Activated B cell treated with CpG ODN at 0.5 μM for 24 hours (primary cell): ENCODE measurements at regions of chr9 and their contacts with region 1.

Region 1: DNA sequence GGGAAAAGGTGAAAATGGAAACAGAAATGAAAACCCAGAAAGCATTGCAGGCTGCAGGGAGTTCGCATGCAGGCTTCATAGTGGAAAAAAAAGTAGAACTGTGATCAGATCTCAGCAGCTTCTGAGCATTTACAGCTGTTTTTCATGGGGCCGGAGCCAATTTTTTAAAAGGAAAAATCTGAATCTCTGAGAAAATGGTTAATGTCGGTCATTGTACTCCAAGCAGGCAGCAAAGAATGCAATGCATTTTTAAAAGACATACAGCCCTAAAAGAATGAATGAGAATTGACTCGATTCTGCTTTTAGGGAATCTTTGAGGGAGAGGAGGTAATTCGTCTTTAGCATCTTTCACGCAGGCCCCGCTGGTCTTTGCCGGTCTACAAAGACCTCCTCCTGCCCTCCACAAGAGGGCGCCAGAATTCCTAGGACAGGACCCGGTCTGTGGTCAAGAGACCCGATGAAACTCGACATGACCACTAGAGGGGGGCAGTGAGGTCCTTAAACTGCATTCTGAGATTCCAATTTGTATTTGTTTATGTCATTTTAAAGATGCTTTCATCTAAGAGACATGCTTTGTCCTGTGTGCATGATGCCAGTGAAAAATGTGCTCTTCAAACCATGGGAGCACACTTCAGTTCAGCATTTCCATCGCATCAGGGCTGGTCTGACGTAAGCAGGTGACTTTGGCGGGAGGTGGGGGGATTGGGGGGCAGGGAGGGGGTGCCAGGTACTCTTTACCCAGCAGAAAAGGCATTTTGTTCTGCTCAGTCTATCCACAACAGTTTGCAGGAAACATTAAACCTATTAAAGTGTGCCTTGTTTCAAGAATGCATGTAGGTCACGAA is 43.7 kb upstream of the TMEM252 start:
- DNase-seq: peak; percentile 57
- ATAC-seq: peak; percentile 100
- H3K4me3 Mint-ChIP-seq: peak overlapping the region; percentile 42
- H3K27ac Mint-ChIP-seq: no peak overlapping the region
- H3K4me1 Mint-ChIP-seq: peaks cover 27% of the 10 kb centered on the region
- H3K27me3 Mint-ChIP-seq: no peaks in the 10 kb centered on the region
- CTCF ChIP-seq: peak; percentile 99

Region 2: GRCh38 chr9:68437785-68438184 is 146.6 kb before region 1 on chr9:
- CTCF ChIA-PET with region 1: no interaction called
- POLR2A ChIA-PET with region 1: no interaction called
- intact Hi-C with region 1: no loop called
- DNase-seq: no peak
- ATAC-seq: no peak
- H3K4me3 Mint-ChIP-seq: no peak overlapping the region
- H3K27ac Mint-ChIP-seq: no peak overlapping the region
- H3K4me1 Mint-ChIP-seq: peaks cover 7% of the 10 kb centered on the region
- H3K27me3 Mint-ChIP-seq: peaks cover 11% of the 10 kb centered on the region
- CTCF ChIP-seq: no peak

Region 3: DNA sequence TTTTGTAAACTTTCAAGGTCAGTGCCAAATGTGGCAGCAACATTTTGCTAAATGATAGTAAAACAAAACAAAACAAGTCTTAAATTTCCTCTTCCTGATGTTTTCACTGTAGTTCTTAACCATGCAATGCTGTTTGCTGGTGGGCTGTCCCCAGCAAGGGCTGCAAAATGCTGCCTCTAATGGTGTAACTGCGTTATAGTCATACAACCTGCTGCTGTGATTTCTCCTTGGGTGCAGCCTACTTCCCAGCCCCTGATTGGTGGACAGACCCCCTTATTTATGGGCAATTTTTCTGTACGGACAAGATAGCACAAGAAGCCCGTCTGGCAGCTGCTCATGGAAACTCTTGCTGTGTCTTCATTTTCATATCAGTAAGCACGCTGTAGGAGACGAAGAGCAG is 94.0 kb after region 1 on chr9:
- CTCF ChIA-PET with region 1: interaction called, 4 read pairs
- POLR2A ChIA-PET with region 1: no interaction called
- intact Hi-C with region 1: loop called (anchors 1 kb)
- DNase-seq: no peak
- ATAC-seq: peak; percentile 65
- H3K4me3 Mint-ChIP-seq: no peak overlapping the region
- H3K27ac Mint-ChIP-seq: no peak overlapping the region
- H3K4me1 Mint-ChIP-seq: peaks cover 14% of the 10 kb centered on the region
- H3K27me3 Mint-ChIP-seq: no peaks in the 10 kb centered on the region
- CTCF ChIP-seq: no peak

Region 4: DNA sequence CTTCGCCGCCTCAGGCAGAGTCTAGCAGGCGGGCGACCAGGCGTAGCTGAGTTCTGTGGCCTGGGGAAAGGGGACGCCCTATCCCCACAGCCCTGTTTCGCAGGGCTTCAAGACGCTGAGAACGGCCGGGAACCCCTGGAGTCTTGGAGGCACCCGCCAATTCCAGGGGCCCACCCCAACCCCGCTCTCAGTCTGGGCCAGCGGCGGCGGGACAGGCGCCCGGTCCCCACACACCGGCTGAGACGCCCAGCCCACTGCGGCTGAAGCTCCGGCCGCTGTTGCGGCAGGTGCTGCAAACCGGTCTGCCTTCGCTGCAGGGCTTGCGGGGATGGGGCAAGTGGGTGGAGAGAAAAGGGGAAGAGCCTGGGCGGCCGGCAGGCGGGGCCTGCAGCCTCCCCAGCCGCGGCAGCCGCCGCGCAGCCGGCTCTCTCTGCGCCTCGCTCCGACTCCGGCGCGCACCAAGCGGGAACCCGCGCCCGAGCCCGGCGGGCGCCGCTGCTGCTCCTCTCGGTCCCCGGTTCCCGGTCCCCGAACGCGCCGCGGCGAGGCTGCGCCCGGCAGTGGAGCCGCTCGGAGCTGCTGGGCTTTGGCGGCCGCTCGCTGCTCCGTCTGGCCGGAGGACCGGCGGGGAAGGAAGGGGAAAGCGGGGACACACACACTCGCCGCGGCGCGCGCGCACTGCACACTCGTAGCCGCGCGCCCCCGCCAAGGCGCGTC is 120.6 kb after region 1 on chr9 and contains the start of gene PIP5K1B:
- CTCF ChIA-PET with region 1: interaction called, 4 read pairs
- POLR2A ChIA-PET with region 1: interaction called, 5 read pairs
- intact Hi-C with region 1: loop called (anchors 1 kb)
- DNase-seq: peak; percentile 76
- ATAC-seq: peak; percentile 85
- H3K4me3 Mint-ChIP-seq: peak within 1 kb of the TSS; percentile 97
- H3K27ac Mint-ChIP-seq: peak within 1 kb of the TSS; percentile 82
- H3K4me1 Mint-ChIP-seq: peaks cover 50% of the 10 kb centered on the region
- H3K27me3 Mint-ChIP-seq: no peaks in the 10 kb centered on the region
- CTCF ChIP-seq: no peak
- total RNA-seq, gene PIP5K1B: 17.1 and 22.0 TPM in 2 replicates

Region 5: GRCh38 chr9:68844631-68845612 is 260.5 kb after region 1 on chr9:
- CTCF ChIA-PET with region 1: interaction called, 23 read pairs
- POLR2A ChIA-PET with region 1: no interaction called
- intact Hi-C with region 1: loop called (anchors 1 kb)
- DNase-seq: no peak
- ATAC-seq: peak; percentile 57
- H3K4me3 Mint-ChIP-seq: no peak overlapping the region
- H3K27ac Mint-ChIP-seq: no peak overlapping the region
- H3K4me1 Mint-ChIP-seq: peaks cover 21% of the 10 kb centered on the region
- H3K27me3 Mint-ChIP-seq: no peaks in the 10 kb centered on the region
- CTCF ChIP-seq: peak; percentile 50

Region 6: GRCh38 chr9:68999393-69000105 is 415.1 kb after region 1 on chr9:
- CTCF ChIA-PET with region 1: interaction called, 10 read pairs
- POLR2A ChIA-PET with region 1: no interaction called
- intact Hi-C with region 1: loop called (anchors 1 kb)
- DNase-seq: peak; percentile 24
- ATAC-seq: peak; percentile 95
- H3K4me3 Mint-ChIP-seq: no peak overlapping the region
- H3K27ac Mint-ChIP-seq: no peak overlapping the region
- H3K4me1 Mint-ChIP-seq: peaks cover 20% of the 10 kb centered on the region
- H3K27me3 Mint-ChIP-seq: no peaks in the 10 kb centered on the region
- CTCF ChIP-seq: peak; percentile 26